Cardiac septum (tissue), 1 donor: ENCODE measurements at regions of chr3 and their contacts with region 1.

Region 1: DNA sequence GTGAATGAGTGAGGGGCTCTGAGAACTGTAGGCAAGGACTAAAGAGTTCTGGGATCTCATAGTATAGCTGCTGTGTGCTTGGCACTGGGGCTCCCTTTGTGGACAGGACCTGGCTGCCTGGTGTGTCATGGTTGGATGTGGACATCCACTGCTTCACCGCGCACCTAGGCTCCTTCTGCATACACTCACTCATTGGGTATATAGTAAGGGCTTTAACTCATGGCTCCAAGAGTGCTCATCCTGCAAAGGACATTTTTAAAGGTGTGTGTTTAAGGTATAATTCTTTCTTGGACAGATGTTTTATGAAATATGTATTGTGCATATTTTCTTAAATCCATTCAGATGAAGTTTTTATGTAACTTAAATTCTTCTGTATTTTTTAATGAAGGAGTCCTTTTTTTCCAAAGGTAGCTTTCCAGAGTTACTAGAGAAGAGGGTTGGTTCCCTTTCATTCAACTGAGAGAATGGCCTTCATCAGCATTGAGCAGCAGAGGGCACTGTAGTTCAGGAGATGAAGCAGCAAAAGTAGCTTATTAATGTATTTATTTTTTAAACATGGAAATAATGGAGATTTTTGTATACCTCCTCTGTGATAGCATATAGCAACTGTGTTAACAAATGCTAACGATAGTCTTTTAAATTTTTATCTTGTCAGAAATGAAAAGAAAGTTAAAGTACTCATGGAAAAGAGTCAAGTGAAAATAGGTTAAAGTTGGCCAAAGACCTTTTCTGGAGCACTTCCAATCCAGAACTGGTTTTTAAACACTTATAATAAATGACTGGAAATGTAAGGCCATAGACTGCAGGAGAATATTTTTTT is 25.2 kb downstream of the OXNAD1 start:
- DNase-seq: no peak

Region 2: DNA sequence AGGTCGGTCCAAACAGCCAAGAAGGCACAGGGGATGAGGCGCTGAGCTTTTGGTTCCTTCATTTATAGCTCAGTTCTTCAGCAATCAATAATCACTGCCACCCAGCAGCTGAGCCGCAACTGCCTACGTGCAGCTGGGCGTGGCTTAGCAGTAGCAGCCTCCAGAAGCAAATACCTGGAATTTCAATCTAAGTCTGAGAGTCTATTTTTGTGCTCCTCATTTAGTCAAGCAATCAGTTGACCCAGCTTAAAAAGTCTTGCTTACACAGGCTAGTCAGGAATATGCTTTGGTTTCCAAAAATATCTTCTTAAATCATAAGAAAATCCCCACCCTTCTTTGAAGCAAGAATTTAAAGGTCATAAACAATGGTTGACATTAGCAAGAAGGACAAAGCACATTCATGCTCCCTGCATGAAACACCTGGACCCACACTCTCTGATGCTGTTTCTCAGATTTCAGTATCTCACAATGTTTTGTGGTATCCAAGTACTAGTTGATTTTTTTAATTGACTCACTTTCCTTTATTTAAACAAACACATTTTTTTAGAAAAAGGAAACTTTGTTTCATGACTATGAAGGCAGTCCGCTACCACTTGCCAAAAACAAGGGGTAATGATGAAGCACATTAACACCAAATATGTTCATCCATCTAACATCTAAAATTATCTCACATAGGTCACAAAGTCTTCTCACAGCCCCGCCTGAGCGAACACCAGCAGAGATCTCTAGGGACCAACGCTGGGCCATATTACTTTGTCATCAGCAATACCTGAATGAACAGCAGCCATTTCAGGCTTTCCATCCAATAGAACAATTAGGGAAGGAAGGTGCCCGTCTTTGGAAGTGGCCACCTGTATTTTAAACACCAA is 80.9 kb after region 1 on chr3:
- intact Hi-C with region 1: loop called (anchors 5 kb)
- DNase-seq: no peak

Region 3: GRCh38 chr3:16516695-16517481 is 226.7 kb after region 1 on chr3:
- intact Hi-C with region 1: loop called (anchors 1 kb)
- DNase-seq: no peak

Region 4: GRCh38 chr3:16533928-16534574 is 243.8 kb after region 1 on chr3:
- intact Hi-C with region 1: loop called (anchors 5 kb)
- DNase-seq: no peak

Region 5: DNA sequence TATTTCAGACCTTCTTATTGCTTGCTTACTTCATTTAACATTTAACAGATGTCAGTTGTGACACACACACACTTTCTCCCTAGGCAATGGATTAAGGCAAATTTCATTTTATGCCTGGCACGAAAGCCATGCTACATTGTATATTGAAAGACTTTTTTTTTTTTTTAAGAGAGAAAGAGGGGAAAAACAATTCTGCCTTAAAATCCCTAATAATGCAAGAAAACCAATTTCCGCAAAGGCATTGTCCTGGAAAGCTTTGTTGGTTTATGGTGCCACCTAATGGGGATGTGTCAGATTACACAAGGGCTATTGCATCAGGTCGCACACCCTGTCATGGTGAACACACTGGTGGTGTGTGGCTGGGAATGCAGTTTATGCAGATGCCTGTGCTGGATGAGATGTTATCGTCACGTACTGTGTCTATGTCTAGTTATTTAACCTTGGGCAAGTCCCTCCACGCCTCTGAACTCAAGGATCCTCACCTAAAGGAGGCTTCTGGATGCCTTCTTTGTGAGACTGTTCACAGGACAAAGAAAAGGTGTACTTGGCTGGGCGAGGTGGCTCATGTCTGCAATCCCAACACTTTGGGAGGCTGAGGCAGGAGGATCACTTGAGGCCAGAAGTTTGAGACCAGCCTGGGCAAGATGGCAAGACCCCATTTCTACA is 260.6 kb after region 1 on chr3:
- intact Hi-C with region 1: loop called (anchors 1 kb)
- DNase-seq: no peak